Left cardiac atrium (tissue), 4 donors: ENCODE measurements at regions of chr1 and their contacts with region 1.

Region 1: DNA sequence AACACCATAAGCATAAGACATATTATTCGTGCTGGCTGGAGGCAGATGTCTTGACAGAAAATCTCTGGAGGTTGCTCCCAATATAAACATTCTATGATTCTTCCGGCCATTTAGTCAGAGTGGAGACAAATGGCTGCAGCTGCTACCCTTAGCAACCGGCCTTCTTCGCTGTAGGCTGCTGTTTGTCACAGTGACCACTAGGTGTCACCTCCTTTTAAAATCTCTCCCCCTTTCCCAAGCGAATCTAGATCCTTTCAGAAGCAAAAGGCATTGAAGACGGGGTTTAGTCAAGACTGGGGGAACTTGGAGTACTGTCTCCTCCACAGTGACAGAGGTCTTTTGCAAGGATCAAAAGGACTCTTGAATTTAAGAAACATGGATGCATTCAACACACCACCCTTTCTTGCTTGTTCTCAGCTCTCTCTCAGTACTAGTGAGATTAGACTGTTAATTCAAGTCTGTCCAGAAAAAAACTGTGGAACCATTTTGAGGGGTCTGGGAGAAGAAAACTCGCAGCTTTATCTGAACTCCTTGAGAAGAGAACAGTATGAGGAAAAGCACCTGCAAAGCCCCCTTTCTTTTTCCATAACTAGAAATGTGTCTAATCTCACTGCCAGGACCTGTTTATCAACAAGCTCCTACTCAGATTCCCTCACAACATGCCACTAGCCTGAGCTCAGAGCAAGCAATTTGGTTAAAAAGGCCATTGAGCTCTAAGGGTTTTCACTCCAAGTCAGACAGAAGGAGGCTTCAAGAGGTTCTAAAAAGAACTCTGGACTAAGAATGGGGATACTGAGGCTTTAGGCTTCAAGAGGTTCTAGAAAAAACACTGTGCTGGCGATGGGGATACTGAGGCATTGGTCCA is 408.3 kb upstream of the PLXNA2 start:
- DNase-seq: peak; percentile 40
- ATAC-seq: peak; percentile 78 to 85

Region 2: GRCh38 chr1:209190591-209191261 is 538.2 kb after region 1 on chr1:
- intact Hi-C with region 1: loop called in 1 of 2 experiments (anchors 2 kb)
- DNase-seq: peak; percentile 42
- ATAC-seq: peak; percentile 59 to 68